CD4-positive, alpha-beta T cell (primary cell): ENCODE measurements at regions of chr9 and their contacts with region 1.

Region 1: DNA sequence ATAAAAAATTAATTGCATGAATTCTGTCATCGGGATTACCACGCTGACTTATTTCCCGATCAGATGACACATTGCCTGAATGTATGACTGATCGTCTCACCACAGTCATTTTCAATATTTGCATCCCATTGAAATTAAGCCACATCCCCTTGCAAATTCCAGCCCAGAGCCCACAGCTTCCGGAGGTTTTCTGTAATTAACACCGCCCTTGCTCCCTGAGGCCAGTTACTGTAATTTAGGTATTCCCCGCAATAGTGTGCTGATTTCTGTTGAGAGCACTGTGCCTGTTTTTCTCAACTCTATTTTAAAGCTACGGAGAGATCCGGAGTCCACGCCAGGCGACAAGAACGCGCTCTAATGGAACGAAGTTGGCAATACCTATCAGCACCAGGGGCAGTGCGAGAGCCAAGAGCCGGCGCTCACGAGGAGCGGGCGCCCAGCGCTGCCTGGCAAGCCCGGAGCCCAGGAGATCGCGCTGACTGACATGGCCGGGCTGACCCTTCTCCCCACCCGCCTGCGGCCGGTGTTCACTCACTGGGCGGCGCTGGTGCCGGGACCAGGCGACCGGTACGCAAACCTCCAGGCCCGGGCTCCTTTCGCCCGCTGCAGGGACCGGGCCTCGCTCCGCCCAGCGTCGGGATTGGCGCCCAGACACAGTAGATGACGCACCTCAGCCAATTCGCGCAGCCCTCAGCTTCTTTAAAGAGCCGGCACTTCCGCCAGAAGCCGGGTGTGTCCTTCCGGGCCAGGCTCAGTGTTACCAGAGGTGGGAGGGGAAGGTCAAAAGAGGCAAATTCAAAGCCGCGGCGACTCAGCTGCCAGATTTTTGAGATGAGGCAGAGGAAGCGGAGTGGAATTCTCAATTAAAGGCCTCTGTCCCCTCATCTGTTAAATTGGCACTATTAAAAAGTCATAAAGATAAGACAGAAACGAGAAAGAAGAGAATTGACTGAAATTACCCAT is at the start of gene PLGRKT:
- DNase-seq: peak; percentile 80 to 96 (median 86)
- ATAC-seq: peak; percentile 91
- H3K4me3 ChIP-seq: peak within 1 kb of the TSS; percentile 81
- H3K4me3 Mint-ChIP-seq: peak within 1 kb of the TSS; percentile 94
- H3K27ac ChIP-seq: peak within 1 kb of the TSS; percentile 89 to 93
- H3K27ac Mint-ChIP-seq: peak within 1 kb of the TSS; percentile 97
- H3K4me1 ChIP-seq: peaks cover 29% of the 10 kb centered on the region
- H3K4me1 Mint-ChIP-seq: peaks cover 46% of the 10 kb centered on the region
- H3K27me3 ChIP-seq: no peaks in the 10 kb centered on the region
- H3K27me3 Mint-ChIP-seq: no peaks in the 10 kb centered on the region
- CTCF ChIP-seq: peak; percentile 18
- total RNA-seq, gene PLGRKT: 13.8 to 15.6 TPM

Region 2: DNA sequence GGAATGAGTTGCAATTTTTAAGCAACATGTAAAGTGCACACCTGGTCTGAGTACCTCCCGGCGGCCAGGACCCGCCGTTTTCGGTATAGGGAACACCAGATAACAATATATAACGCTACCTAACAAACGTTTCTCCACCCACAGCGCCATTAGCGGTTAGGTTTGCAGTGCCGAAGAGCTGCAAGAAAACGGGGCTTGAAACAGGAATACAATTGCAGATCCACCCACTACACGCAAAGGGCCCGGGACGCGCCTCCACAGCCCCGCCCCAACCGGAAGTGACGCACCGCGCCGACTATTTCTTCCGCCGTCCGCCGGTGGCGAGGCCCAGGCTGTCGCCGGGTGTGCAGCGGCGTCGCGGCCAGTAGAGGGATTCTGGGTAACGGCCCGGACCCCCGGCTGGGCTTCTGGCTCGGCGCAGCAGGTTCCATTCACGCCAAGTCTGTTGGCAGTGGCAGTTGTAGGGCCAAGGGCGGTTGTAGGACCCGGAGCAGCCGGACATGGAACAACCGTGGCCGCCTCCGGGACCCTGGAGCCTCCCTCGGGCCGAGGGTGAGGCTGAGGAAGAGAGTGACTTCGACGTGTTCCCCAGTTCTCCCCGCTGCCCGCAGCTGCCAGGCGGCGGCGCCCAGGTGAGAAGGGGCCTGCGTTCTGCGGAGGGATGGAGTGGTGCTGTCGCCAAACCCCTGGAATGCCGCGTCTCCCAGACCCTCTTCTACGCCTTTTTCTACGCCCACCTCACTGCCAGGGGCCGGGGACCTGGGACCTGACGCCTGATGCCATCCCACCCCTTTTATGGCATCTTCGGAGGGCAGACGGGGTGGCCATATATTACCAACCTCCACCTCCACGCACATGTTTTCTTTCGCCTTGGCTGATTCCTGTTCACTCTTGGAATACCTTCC is 758.0 kb before region 1 on chr9 and contains the start of gene CDC37L1:
- CTCF ChIA-PET with region 1: no interaction called
- POLR2A ChIA-PET with region 1: no interaction called
- intact Hi-C with region 1: loop called in 1 of 2 experiments (anchors 5 kb)
- DNase-seq: peak; percentile 97 to 100 (median 99)
- ATAC-seq: peak; percentile 82
- H3K4me3 ChIP-seq: peak within 1 kb of the TSS; percentile 95
- H3K4me3 Mint-ChIP-seq: no peak within 1 kb of the TSS
- H3K27ac ChIP-seq: peak within 1 kb of the TSS; percentile 95
- H3K27ac Mint-ChIP-seq: no peak within 1 kb of the TSS
- H3K4me1 ChIP-seq: peaks cover 20% of the 10 kb centered on the region
- H3K4me1 Mint-ChIP-seq: peaks cover 17% of the 10 kb centered on the region
- H3K27me3 ChIP-seq: no peaks in the 10 kb centered on the region
- H3K27me3 Mint-ChIP-seq: no peaks in the 10 kb centered on the region
- CTCF ChIP-seq: peak; percentile 74
- total RNA-seq, gene CDC37L1: 49.1 to 53.4 TPM

Region 3: GRCh38 chr9:4984621-4985385 is 452.7 kb before region 1 on chr9 and contains the start of gene JAK2:
- CTCF ChIA-PET with region 1: no interaction called
- POLR2A ChIA-PET with region 1: interaction called, 3 read pairs
- intact Hi-C with region 1: loop called in 1 of 2 experiments (anchors 5 kb)
- DNase-seq: peak; percentile 50 to 93 (median 70)
- ATAC-seq: peak; percentile 85
- H3K4me3 ChIP-seq: peak within 1 kb of the TSS; percentile 87
- H3K4me3 Mint-ChIP-seq: peak within 1 kb of the TSS; percentile 94
- H3K27ac ChIP-seq: peak within 1 kb of the TSS; percentile 65 to 85
- H3K27ac Mint-ChIP-seq: peak within 1 kb of the TSS; percentile 79
- H3K4me1 ChIP-seq: peaks cover 33% of the 10 kb centered on the region
- H3K4me1 Mint-ChIP-seq: peaks cover 27% of the 10 kb centered on the region
- H3K27me3 ChIP-seq: no peaks in the 10 kb centered on the region
- H3K27me3 Mint-ChIP-seq: no peaks in the 10 kb centered on the region
- CTCF ChIP-seq: peak; percentile 24
- total RNA-seq, gene JAK2: 7.2 to 7.5 TPM

Region 4: GRCh38 chr9:5301544-5301943 is 136.0 kb before region 1 on chr9:
- CTCF ChIA-PET with region 1: no interaction called
- POLR2A ChIA-PET with region 1: no interaction called
- intact Hi-C with region 1: loop called in 1 of 2 experiments (anchors 5 kb)
- DNase-seq: peak in 5 of 14 experiments; percentile 7 to 47 (median 43)
- ATAC-seq: no peak
- H3K4me3 ChIP-seq: no peak overlapping the region
- H3K4me3 Mint-ChIP-seq: peak overlapping the region; percentile 77
- H3K27ac ChIP-seq: no peak overlapping the region
- H3K27ac Mint-ChIP-seq: peak overlapping the region; percentile 72
- H3K4me1 ChIP-seq: peaks cover 12% of the 10 kb centered on the region
- H3K4me1 Mint-ChIP-seq: peaks cover 34% of the 10 kb centered on the region
- H3K27me3 ChIP-seq: no peaks in the 10 kb centered on the region
- H3K27me3 Mint-ChIP-seq: no peaks in the 10 kb centered on the region
- CTCF ChIP-seq: no peak

Region 5: GRCh38 chr9:5389109-5389732 is 48.3 kb before region 1 on chr9:
- CTCF ChIA-PET with region 1: no interaction called
- POLR2A ChIA-PET with region 1: no interaction called
- intact Hi-C with region 1: no loop called
- DNase-seq: no peak
- ATAC-seq: no peak
- H3K4me3 ChIP-seq: no peak overlapping the region
- H3K4me3 Mint-ChIP-seq: no peak overlapping the region
- H3K27ac ChIP-seq: no peak overlapping the region
- H3K27ac Mint-ChIP-seq: no peak overlapping the region
- H3K4me1 ChIP-seq: peaks cover 4% of the 10 kb centered on the region
- H3K4me1 Mint-ChIP-seq: peaks cover 24% of the 10 kb centered on the region
- H3K27me3 ChIP-seq: no peaks in the 10 kb centered on the region
- H3K27me3 Mint-ChIP-seq: no peaks in the 10 kb centered on the region
- CTCF ChIP-seq: no peak

Region 6: GRCh38 chr9:5425006-5425628 is 12.4 kb before region 1 on chr9:
- CTCF ChIA-PET with region 1: interaction called, 7 read pairs
- POLR2A ChIA-PET with region 1: interaction called, 11 read pairs
- intact Hi-C with region 1: no loop called
- DNase-seq: peak in 3 of 14 experiments; percentile 61 to 67 (median 66)
- ATAC-seq: peak; percentile 74
- H3K4me3 ChIP-seq: no peak overlapping the region
- H3K4me3 Mint-ChIP-seq: no peak overlapping the region
- H3K27ac ChIP-seq: no peak overlapping the region
- H3K27ac Mint-ChIP-seq: no peak overlapping the region
- H3K4me1 ChIP-seq: no peaks in the 10 kb centered on the region
- H3K4me1 Mint-ChIP-seq: peaks cover 5% of the 10 kb centered on the region
- H3K27me3 ChIP-seq: no peaks in the 10 kb centered on the region
- H3K27me3 Mint-ChIP-seq: no peaks in the 10 kb centered on the region
- CTCF ChIP-seq: peak; percentile 79

Region 7: DNA sequence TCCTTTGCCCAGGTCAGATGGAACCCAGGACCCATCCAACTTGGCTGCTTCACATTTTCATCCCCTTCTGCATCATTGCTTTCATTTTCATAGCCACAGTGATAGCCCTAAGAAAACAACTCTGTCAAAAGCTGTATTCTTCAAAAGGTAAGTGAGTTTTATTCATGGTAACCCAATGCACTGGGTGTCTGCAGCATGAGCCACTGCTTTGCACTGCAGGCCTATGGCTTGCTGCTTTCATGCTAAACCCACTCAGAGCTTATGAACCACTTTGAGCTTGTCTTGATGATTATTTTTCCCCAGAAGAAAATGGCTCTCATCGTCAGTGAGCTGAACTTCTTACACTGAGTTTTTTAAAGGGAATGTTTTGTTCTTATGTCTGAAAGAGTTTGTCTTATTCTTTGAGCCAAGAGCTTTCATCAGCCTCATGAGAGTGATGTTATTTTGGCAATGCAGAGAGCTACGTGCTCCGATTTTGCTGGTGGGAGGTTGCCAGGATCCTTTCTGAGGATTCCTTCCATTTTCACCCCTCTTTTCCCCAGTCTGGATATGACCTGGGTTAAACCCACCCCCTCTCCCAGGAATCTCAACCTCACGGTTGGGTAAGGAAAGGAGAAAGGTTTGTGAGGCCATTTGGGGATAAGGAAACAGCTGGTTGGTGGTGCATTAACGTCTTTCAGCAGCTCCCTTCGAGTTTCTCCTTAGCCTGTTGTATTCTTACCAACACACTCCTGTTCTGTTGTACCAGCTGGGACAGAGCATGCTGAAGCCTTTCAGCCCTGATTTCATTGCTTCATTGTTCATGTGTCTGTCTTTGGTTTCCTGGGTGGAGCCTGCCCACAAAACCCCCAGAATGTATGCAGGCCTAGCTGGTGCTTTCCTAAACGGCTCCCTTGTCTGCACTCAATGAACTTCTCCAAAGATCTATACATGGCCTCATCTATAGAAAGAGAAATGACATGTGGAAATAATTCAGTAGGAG is 120.4 kb after region 1 on chr9:
- CTCF ChIA-PET with region 1: no interaction called
- POLR2A ChIA-PET with region 1: interaction called, 17 read pairs
- intact Hi-C with region 1: no loop called
- DNase-seq: peak; percentile 28 to 86 (median 46)
- ATAC-seq: peak; percentile 97
- H3K4me3 ChIP-seq: no peak overlapping the region
- H3K4me3 Mint-ChIP-seq: peak overlapping the region; percentile 76
- H3K27ac ChIP-seq: peak overlapping the region; percentile 67 to 81
- H3K27ac Mint-ChIP-seq: peak overlapping the region; percentile 94
- H3K4me1 ChIP-seq: peaks cover 43% of the 10 kb centered on the region
- H3K4me1 Mint-ChIP-seq: peaks cover 66% of the 10 kb centered on the region
- H3K27me3 ChIP-seq: no peaks in the 10 kb centered on the region
- H3K27me3 Mint-ChIP-seq: no peaks in the 10 kb centered on the region
- CTCF ChIP-seq: no peak

Region 8: GRCh38 chr9:6008169-6008979 is 570.8 kb after region 1 on chr9:
- CTCF ChIA-PET with region 1: no interaction called
- POLR2A ChIA-PET with region 1: interaction called, 3 read pairs
- intact Hi-C with region 1: loop called in 1 of 2 experiments (anchors 10 kb)
- DNase-seq: peak; percentile 88 to 99 (median 92)
- ATAC-seq: peak; percentile 70
- H3K4me3 ChIP-seq: peak overlapping the region; percentile 87
- H3K4me3 Mint-ChIP-seq: peak overlapping the region; percentile 91
- H3K27ac ChIP-seq: peak overlapping the region; percentile 91 to 95
- H3K27ac Mint-ChIP-seq: peak overlapping the region; percentile 97
- H3K4me1 ChIP-seq: peaks cover 11% of the 10 kb centered on the region
- H3K4me1 Mint-ChIP-seq: peaks cover 70% of the 10 kb centered on the region
- H3K27me3 ChIP-seq: no peaks in the 10 kb centered on the region
- H3K27me3 Mint-ChIP-seq: no peaks in the 10 kb centered on the region
- CTCF ChIP-seq: no peak